ENCODE measurements at regions of chr3 and their contacts with region 1.

Region 1: GRCh38 chr3:5071061-5071460 is 51.0 kb upstream of the ARL8B start:
- DNase-seq: no peak
- ATAC-seq: no peak
- H3K4me3 ChIP-seq: no peak overlapping the region
- H3K27ac ChIP-seq: no peak overlapping the region
- H3K4me1 ChIP-seq: peaks cover 9 to 10% of the 10 kb centered on the region in 2 donors
- H3K27me3 ChIP-seq: no peaks in the 10 kb centered on the region
- CTCF ChIP-seq: no peak
- POLR2A ChIP-seq: no peak

Region 2: DNA sequence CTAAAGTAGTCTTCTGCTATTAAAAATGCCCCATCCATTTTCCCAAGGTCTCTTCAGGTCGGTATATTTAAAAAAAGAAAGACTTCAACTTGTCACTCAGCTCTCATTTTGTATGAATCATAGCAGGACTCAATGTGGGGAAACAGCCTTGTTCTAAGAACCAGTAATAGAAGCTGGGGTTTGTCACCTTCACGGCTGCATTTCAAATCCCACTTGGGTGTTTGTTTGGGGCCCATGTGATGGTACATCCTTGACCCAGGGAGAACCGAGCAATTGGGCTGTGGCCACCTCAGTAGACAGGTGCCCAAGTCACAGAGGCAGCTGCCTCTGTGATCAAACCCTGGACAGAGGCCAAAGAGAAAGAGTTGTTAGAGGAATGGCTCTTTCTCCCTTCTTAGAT is 19.3 kb before region 1 on chr3:
- in situ Hi-C with region 1: no loop called
- intact Hi-C with region 1: loop called (anchors 1 kb)
- DNase-seq: peak; percentile 91 to 95
- ATAC-seq: peak; percentile 91 to 94
- H3K4me3 ChIP-seq: no peak overlapping the region
- H3K27ac ChIP-seq: peak overlapping the region; percentile 83 to 92 (median 86)
- H3K4me1 ChIP-seq: peaks cover 43 to 48% of the 10 kb centered on the region in 2 donors
- H3K27me3 ChIP-seq: no peaks in the 10 kb centered on the region
- CTCF ChIP-seq: peak in 1 of 5 experiments; percentile 10
- POLR2A ChIP-seq: peak in 1 of 2 donors; percentile 35

Region 3: GRCh38 chr3:5194341-5195159 is 123.5 kb after region 1 on chr3:
- in situ Hi-C with region 1: no loop called
- intact Hi-C with region 1: loop called (anchors 2 kb)
- DNase-seq: peak; percentile 69 to 70
- ATAC-seq: peak; percentile 97 to 98
- H3K4me3 ChIP-seq: no peak overlapping the region
- H3K27ac ChIP-seq: peak overlapping the region; percentile 79 to 88 (median 82)
- H3K4me1 ChIP-seq: peaks cover 49 to 51% of the 10 kb centered on the region in 2 donors
- H3K27me3 ChIP-seq: no peaks in the 10 kb centered on the region
- CTCF ChIP-seq: no peak
- POLR2A ChIP-seq: peak in 1 of 2 donors; percentile 39